Activated T-helper 1 cell treated with anti-CD3 and anti-CD28 coated beads, Interleukin-12 subunit alpha, Interleukin-12 subunit beta, Interleukin-2, Interleukin-4 antibody, amounts not matched to agents 30 ng/mL and 10 ng/mL and 1 ng/mL, durations not matched to agents 14 hours and 24 hours and 36 hours (primary cell): ENCODE measurements at regions of chr3 and their contacts with region 1.

Region 1: DNA sequence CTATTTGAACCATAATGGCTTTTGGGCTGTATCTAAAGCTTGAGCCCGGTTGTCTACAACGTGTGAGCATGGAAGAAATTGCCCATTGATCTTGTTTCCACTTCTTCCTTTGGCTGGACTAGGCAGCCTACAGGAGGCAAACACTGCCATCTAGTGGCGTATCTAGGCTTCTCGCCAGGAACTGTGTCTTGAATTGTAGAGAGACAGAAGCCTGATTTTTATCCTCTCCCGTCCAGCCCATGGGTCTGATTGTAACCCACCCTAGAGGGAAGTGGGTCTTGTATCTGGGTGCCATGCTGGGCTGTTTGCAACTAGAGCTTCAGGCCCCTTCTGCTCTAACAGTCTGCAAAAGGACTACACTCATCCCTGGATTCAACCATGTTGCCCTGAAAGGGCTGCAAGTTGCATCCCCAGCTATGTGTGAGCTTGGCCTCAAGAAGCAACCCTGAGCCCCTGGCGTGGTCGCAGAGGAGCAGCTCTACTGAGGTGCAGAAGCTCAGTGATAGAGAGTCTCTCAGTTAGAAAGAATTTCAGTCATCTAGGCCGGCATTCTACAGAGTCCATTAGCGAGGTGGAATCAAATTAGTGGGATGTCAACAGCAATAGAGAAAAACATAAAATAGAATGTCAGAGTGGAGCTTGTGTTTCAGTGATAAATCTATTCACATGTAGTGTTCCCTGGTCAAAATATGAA is 170.2 kb upstream of the UMPS start:
- DNase-seq: peak; percentile 24
- H3K4me3 Mint-ChIP-seq: no peak overlapping the region
- H3K27ac Mint-ChIP-seq: no peak overlapping the region
- H3K4me1 Mint-ChIP-seq: no peaks in the 10 kb centered on the region
- H3K27me3 Mint-ChIP-seq: peaks cover 26% of the 10 kb centered on the region

Region 2: DNA sequence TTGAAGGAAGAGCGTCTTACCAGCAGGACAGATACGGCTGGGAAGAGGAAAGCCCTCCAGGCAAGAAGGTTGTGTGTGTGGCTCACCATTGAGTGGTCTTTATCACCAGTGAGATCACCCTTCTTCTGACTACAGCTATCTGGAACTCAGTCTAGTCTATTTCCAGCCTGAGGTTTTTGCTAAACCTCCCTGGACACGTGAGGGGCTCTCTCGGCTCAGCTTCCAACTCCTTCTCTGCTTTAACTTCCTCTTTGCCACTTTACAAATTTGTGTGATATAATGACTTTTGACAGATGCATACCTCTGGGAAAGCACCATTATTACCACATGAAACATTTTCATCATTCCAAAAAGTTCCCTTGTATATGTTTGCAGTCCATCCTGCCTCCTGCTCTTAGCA is 552.8 kb before region 1 on chr3:
- intact Hi-C with region 1: no loop called
- DNase-seq: no peak
- H3K4me3 Mint-ChIP-seq: no peak overlapping the region
- H3K27ac Mint-ChIP-seq: no peak overlapping the region
- H3K4me1 Mint-ChIP-seq: no peaks in the 10 kb centered on the region
- H3K27me3 Mint-ChIP-seq: peaks cover 28% of the 10 kb centered on the region

Region 3: DNA sequence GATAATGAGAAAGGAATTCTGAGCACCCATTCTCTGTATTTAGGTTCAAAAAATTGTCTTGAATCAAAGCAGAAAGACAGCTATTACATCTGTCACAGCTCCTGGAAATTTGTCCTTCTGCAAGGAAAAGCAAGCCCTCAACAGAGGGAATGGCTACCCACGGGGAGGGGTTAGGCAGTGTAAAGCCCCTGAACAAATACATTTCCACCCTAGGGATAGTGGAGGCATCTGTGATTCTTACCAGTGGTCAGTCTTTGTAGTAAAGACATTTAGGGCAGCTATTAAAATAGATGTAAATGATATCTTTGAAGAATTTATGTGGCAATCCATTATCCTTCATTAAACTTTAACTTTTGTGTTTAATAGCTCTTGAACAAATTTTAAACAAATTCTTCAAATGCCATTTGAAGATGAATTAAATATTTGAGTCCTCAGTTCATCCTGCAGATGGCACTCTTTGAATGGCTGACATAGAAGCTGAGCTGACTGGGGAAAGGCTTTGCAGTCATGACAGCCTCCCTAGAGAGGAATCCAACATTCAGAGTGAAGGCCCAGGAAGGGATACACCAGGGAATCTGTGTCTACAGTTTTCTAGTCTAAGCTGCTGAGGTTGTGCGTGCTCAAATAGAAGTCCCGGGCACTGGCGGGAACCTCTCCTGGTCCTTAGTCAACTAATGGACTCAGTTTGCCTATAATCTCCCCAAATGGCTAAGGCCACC is 208.4 kb before region 1 on chr3:
- intact Hi-C with region 1: loop called (anchors 2 kb)
- DNase-seq: no peak
- H3K4me3 Mint-ChIP-seq: no peak overlapping the region
- H3K27ac Mint-ChIP-seq: no peak overlapping the region
- H3K4me1 Mint-ChIP-seq: no peaks in the 10 kb centered on the region
- H3K27me3 Mint-ChIP-seq: peaks cover 10% of the 10 kb centered on the region